ENCODE measurements at regions of chr19 and their contacts with region 1.

Region 1: GRCh38 chr19:41913538-41914423 is 14.5 kb downstream of the ERFL start:
- DNase-seq: no peak
- H3K4me3 Mint-ChIP-seq: no peak overlapping the region
- H3K27ac Mint-ChIP-seq: peak overlapping the region; percentile 21
- H3K4me1 Mint-ChIP-seq: peaks cover 15% of the 10 kb centered on the region
- H3K27me3 Mint-ChIP-seq: peaks cover 23% of the 10 kb centered on the region

Region 2: DNA sequence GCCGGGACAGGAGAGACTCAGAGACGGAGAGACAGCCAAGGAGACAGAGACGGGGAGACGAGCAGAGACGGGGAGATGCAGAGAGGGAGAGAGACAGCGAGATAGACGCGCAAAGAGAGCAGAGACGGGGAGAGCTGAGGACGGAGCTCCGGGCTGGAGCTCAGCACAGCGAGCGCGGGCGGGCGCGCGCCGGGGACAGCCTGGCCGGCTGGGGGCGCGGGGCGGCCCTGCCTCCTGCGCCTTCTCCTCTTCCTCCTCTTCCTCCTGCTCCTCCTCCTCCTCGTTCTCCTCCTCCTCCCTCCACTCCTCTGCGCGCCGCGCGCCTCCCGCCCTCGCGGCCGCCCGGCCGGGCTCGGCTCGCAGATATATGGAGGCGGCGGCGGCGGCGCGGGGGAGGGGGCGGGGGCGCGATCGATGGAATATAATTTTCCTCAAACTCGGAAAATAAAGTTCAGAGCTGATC is 14.5 kb after region 1 on chr19 and contains the start of gene ERFL:
- intact Hi-C with region 1: loop called (anchors 2 kb)
- DNase-seq: no peak
- H3K4me3 Mint-ChIP-seq: peak within 1 kb of the TSS; percentile 88
- H3K27ac Mint-ChIP-seq: peak within 1 kb of the TSS; percentile 88
- H3K4me1 Mint-ChIP-seq: peaks cover 24% of the 10 kb centered on the region
- H3K27me3 Mint-ChIP-seq: peaks cover 4% of the 10 kb centered on the region
- total RNA-seq, gene ERFL: 3.1 TPM in 2 replicates